ENCODE measurements at regions of chr9 and their contacts with region 1.

Region 1: GRCh38 chr9:34458013-34458958 is at the starts of genes DNAI1 and FAM219A:
- DNase-seq: peak; percentile 99
- ATAC-seq: peak; percentile 92
- H3K4me3 Mint-ChIP-seq: peak within 1 kb of the TSS; percentile 90
- H3K27ac Mint-ChIP-seq: peak within 1 kb of the TSS; percentile 68
- H3K4me1 Mint-ChIP-seq: peaks cover 34% of the 10 kb centered on the region
- H3K27me3 Mint-ChIP-seq: peaks cover 12% of the 10 kb centered on the region
- CTCF ChIP-seq: no peak
- total RNA-seq, gene DNAI1: not detected in 2 replicates
- total RNA-seq, gene FAM219A: 13.5 and 16.9 TPM in 2 replicates

Region 2: GRCh38 chr9:34048923-34049697 is 409.2 kb before region 1 on chr9:
- CTCF ChIA-PET with region 1: no interaction called
- POLR2A ChIA-PET with region 1: no interaction called
- intact Hi-C with region 1: loop called (anchors 1 kb)
- DNase-seq: peak; percentile 97
- ATAC-seq: peak; percentile 80
- H3K4me3 Mint-ChIP-seq: peak overlapping the region; percentile 99
- H3K27ac Mint-ChIP-seq: peak overlapping the region; percentile 100
- H3K4me1 Mint-ChIP-seq: peaks cover 25% of the 10 kb centered on the region
- H3K27me3 Mint-ChIP-seq: no peaks in the 10 kb centered on the region
- CTCF ChIP-seq: no peak

Region 3: GRCh38 chr9:34437006-34437925 is 21.0 kb before region 1 on chr9:
- CTCF ChIA-PET with region 1: interaction called, 6 read pairs
- POLR2A ChIA-PET with region 1: no interaction called
- intact Hi-C with region 1: loop called (anchors 2 kb)
- DNase-seq: no peak
- ATAC-seq: peak; percentile 85
- H3K4me3 Mint-ChIP-seq: no peak overlapping the region
- H3K27ac Mint-ChIP-seq: no peak overlapping the region
- H3K4me1 Mint-ChIP-seq: no peaks in the 10 kb centered on the region
- H3K27me3 Mint-ChIP-seq: no peaks in the 10 kb centered on the region
- CTCF ChIP-seq: no peak

Region 4: DNA sequence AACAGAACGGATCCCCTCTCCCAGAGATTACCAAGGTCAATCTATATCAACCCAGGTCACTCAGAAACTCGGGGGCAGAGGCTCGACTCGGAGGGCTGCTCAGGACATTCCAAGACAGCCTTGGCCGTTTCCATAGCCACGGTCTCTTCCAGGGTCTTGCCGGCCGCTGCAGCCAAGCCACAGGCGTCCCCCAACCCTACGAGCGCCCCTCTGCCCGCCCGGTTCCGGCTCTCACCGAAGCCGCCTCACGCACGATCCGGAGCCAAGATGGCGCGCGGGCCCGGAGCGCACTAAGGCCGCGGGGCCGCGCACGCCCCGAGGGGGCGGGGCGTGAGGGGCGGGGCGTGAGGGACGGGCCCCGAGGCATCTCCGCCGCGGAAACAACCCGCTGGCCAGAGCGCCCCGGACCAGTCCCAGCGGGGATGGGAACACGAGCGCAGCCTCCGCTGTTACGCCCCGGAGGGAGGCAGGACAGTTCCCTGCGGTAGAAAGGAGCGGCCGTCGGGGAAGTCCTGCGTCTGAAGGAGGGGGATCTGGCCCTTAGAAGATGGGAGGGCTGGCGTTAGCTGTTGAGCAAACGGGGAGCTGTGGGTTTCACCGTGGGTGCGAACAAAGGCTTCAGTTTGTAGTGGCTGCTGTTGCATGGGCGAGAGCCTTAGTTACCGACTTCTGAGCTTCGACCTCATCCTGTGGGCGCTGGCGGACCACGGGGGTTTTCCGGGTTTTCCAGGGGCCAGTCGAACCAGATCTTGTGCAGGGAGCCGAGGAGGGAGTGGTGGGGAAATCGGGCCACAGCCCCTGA is 153.7 kb after region 1 on chr9 and contains the start of gene RPP25L:
- CTCF ChIA-PET with region 1: no interaction called
- POLR2A ChIA-PET with region 1: interaction called, 5 read pairs
- intact Hi-C with region 1: loop called (anchors 1 kb)
- DNase-seq: peak; percentile 90
- ATAC-seq: peak; percentile 96
- H3K4me3 Mint-ChIP-seq: peak within 1 kb of the TSS; percentile 86
- H3K27ac Mint-ChIP-seq: peak within 1 kb of the TSS; percentile 90
- H3K4me1 Mint-ChIP-seq: peaks cover 19% of the 10 kb centered on the region
- H3K27me3 Mint-ChIP-seq: no peaks in the 10 kb centered on the region
- CTCF ChIP-seq: no peak
- total RNA-seq, gene RPP25L: 17.5 and 18.9 TPM in 2 replicates

Region 5: GRCh38 chr9:35111001-35111933 is 653.0 kb after region 1 on chr9:
- CTCF ChIA-PET with region 1: no interaction called
- POLR2A ChIA-PET with region 1: no interaction called
- intact Hi-C with region 1: loop called (anchors 1 kb)
- DNase-seq: peak; percentile 86
- ATAC-seq: peak; percentile 81
- H3K4me3 Mint-ChIP-seq: peak overlapping the region; percentile 83
- H3K27ac Mint-ChIP-seq: peak overlapping the region; percentile 88
- H3K4me1 Mint-ChIP-seq: peaks cover 62% of the 10 kb centered on the region
- H3K27me3 Mint-ChIP-seq: no peaks in the 10 kb centered on the region
- CTCF ChIP-seq: no peak